ENCODE measurements at regions of chr4 and their contacts with region 1.

Region 1: GRCh38 chr4:72286185-72286584 is 254.4 kb downstream of the NPFFR2 start:
- DNase-seq: no peak

Region 2: GRCh38 chr4:71732706-71733105 is 553.5 kb before region 1 on chr4:
- intact Hi-C with region 1: loop called (anchors 10 kb)
- DNase-seq: no peak

Region 3: GRCh38 chr4:73010789-73011650 is 724.8 kb after region 1 on chr4:
- intact Hi-C with region 1: no loop called
- DNase-seq: peak in 2 of 10 donors; percentile 64 to 80

Measured in posterior cingulate gyrus (tissue), 11 donors.